ENCODE measurements at regions of chr11 and their contacts with region 1.

Region 1: DNA sequence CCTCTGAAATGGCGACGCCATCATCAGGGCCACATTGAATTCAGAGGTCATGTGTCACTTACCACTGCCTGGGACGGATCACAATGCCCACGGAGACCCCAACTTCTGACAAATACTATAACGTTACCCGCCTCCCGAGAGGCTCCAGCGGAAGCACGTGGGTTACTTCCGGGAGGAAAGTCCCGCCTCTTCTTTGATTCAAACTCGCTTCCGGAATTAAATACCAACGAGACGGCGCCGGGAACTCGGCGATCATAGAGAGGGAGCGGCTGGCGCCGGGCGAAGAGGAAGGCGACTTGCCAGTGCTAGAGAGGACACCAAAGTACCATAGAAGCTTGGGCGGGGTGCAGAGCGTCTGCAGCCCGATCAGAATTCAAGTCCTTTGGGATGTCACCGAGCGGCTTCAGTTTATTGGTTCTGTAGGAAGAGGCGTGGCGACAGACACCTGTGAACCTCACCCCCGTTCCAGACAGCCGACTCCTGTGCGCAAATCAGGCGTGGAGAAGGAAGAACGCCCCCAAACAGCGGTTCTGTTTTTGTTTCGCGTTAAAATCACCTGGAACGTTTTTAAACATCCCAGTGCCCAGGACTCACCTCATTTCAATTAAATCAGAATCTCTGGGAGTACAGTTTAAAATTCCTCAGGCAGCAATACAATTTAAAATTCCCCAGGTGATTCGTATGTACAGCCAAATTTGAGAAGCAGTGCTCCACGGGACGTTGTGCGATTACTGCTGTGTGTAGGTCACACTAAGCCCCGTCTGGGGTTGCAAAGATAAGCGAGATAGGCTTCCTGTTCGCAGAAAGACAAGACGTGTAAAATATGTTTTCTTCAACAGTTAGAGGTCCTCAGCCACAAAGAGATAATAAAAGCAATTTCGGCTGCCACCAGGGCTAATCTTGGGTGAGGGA is at the start of gene TIMM10:
- DNase-seq: peak; percentile 96 to 98
- ATAC-seq: peak; percentile 95 to 97
- H3K4me3 ChIP-seq: peak within 1 kb of the TSS; percentile 84 to 94 (median 85)
- H3K27ac ChIP-seq: peak within 1 kb of the TSS; percentile 88 to 92 (median 90)
- H3K4me1 ChIP-seq: peaks cover 13 to 19% of the 10 kb centered on the region in 2 donors
- H3K27me3 ChIP-seq: no peaks in the 10 kb centered on the region
- CTCF ChIP-seq: no peak
- POLR2A ChIP-seq: peak; percentile 53 to 82
- total RNA-seq, gene TIMM10: 45.4 to 61.7 (median 49.5) TPM

Region 2: DNA sequence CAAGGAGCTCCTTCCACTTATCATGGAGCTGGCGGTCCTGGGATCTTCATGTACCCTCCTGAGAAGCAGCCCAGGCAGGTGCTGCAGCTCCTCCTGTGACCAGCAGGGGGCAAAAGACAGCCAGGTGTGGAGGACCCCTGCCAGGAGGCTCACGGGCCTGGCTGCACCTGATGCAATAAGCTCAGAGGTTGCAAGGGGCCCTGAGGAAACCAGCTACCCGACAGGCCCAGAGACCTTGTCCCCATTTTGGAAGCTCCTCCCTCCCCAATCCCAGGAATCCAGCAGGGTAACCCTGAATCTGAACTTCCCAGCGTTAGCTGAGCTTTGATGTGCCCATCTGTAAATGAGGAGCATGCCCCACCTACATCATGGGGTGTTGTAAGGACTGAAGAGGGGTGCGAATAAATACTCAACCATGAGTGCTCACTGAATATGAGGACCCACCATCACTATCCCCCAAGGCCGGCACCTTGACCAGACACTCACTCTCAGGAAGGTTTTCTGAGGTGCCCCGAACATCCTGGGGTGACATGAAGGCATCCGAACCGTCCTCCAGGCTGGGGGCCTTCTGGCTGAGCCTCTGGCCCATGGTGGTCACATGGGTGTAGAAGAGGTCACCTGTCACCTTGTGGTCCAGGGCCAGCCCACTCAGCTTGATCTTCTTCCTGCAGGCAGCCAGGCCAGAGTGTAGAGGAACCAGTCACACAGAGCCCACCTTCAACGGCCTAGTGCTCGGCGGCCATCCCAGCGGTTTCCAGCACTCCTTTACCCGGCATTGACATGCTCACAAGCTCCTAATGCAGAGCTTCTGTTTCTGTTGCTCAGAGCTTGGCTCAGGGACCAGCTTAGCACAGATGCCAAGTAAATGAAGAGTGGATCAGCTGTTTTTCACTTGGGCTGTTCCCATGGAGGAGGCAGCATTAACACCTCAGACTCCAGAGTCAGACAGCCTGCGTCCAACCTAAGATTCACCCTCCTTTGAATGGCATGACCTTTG is 37.0 kb before region 1 on chr11:
- in situ Hi-C with region 1: loop called in 3 of 4 experiments (anchors 5 kb)
- intact Hi-C with region 1: loop called (anchors 1 kb)
- DNase-seq: peak; percentile 45 to 80
- ATAC-seq: peak; percentile 74 to 82
- H3K4me3 ChIP-seq: no peak overlapping the region
- H3K27ac ChIP-seq: peak overlapping the region; percentile 72 to 80 (median 77)
- H3K4me1 ChIP-seq: peaks cover 20 to 25% of the 10 kb centered on the region in 2 donors
- H3K27me3 ChIP-seq: no peaks in the 10 kb centered on the region
- CTCF ChIP-seq: peak; percentile 88 to 96 (median 92)
- POLR2A ChIP-seq: no peak

Region 3: DNA sequence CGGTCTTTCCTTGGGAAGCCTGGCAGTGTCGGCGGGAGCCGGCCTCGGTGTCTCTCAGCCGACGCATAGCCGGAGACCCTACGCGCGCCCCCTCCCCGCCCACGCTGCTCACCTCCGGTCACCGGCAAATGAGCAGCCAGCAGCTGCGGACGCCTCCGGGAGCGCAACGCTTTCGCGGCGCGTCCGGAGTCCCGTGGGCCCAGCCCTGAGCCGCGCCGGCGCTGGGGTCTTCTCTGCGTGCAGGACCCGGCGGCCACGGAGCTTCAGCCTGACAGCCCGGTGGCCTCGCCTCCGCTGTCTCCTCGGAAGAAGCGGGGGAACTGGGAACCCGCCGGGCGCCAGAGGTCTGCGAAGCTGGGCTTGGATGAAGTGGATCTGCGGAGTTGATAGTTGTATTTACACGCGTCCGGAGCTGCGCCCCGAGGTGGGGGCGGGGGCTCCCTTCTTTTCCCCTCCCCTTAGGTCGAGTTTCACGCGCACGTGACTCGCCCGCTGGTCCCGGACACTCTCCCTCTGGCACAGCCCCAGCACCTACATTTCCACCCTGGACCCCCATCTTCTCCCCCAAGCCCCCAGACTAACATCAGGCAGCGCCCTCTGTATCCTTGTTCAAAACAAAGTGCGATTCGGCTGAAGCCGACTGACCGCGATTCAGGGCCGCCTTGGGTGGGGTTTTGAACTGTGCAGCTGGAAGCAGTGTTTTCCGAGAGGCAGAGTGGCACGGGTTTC is 15.4 kb before region 1 on chr11 and contains the start of gene SLC43A1:
- in situ Hi-C with region 1: no loop called
- intact Hi-C with region 1: no loop called
- DNase-seq: peak; percentile 43 to 60
- ATAC-seq: peak; percentile 78 to 83
- H3K4me3 ChIP-seq: peak within 1 kb of the TSS; percentile 80 to 100 (median 91)
- H3K27ac ChIP-seq: peak within 1 kb of the TSS; percentile 80 to 93 (median 86)
- H3K4me1 ChIP-seq: peaks cover 9 to 17% of the 10 kb centered on the region in 2 donors
- H3K27me3 ChIP-seq: no peaks in the 10 kb centered on the region
- CTCF ChIP-seq: no peak
- POLR2A ChIP-seq: peak; percentile 46 to 54
- total RNA-seq, gene SLC43A1: 7.4 to 35.1 (median 15.8) TPM

Region 4: DNA sequence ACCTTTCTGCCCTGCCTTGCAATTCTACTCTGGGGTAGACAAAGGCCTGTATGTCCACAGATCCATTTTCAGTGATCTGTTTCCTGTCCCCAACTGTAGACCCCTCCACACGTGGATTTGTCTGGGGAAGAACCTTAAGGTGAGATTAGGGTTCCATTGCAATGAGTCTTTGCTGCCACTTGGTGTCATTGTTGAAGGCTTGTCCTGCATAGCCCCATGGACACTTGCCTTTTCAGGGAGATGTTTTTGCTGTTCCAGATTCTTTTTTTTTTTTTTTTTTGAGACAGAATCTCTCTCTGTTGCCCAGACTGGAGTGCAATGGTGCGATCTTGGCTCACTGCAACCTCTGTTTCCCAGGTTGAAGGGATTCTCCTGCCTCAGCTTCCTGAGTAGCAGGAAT is 88.5 kb after region 1 on chr11:
- in situ Hi-C with region 1: no loop called
- intact Hi-C with region 1: no loop called
- DNase-seq: no peak
- ATAC-seq: no peak
- H3K4me3 ChIP-seq: no peak overlapping the region
- H3K27ac ChIP-seq: no peak overlapping the region
- H3K4me1 ChIP-seq: no peaks in the 10 kb centered on the region
- H3K27me3 ChIP-seq: no peaks in the 10 kb centered on the region
- CTCF ChIP-seq: no peak
- POLR2A ChIP-seq: no peak

Region 5: DNA sequence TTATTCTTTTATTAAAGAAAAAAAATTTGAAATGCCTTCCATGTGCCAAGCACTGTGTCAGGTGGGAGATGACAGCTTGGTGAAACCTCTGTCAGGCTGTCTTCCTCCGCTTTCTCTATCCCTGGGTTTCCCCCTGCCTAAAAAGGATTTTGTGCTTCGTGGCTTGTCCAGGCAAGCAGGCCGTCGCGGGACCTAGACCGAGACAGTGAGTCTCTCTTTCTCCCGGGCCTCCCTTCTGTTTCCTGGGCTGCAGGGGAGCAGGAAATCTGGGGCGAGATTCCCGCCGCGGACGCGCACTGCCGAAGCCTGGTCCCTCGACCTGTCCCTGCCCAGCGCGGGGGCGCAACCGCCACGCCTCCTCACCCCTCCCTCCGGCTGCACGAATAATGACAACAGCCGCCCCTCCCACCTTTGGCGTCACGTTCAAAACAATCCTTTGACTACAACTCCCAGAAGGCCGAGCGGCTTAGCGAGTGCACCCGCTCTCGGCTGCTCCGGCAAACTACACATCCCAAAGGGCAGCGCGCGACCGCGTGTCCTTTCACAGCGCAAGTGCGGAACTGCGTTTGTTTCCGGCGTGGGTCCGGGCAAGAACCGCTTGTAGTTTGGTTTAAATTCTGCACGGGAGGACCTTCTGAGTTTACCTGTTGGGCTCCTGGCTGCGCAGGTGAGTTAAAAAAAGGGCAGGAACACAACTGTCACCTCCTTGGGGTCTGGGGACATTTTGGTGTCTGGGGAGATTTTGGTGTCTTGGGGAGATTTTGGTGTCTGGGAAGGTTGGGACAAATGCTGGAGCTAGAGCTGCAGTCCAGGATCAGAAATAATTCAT is 126.6 kb after region 1 on chr11 and contains the start of gene CLP1:
- in situ Hi-C with region 1: no loop called
- intact Hi-C with region 1: loop called (anchors 2 kb)
- DNase-seq: peak; percentile 99
- ATAC-seq: peak; percentile 99
- H3K4me3 ChIP-seq: peak within 1 kb of the TSS; percentile 62 to 92 (median 79)
- H3K27ac ChIP-seq: peak within 1 kb of the TSS; percentile 84 to 94 (median 91)
- H3K4me1 ChIP-seq: peaks cover 8 to 23% of the 10 kb centered on the region in 2 donors
- H3K27me3 ChIP-seq: no peaks in the 10 kb centered on the region
- CTCF ChIP-seq: no peak
- POLR2A ChIP-seq: peak; percentile 64 to 80
- total RNA-seq, gene CLP1: 10.6 to 15.3 (median 11.2) TPM